AG04449 (cell line): ENCODE measurements at regions of chr15 and their contacts with region 1.

Region 1: GRCh38 chr15:32838820-32839219 is 121.0 kb downstream of the GREM1 start:
- DNase-seq: peak; percentile 88
- H3K4me3 ChIP-seq: peak overlapping the region; percentile 40
- CTCF ChIP-seq: no peak

Region 2: GRCh38 chr15:32828507-32829186 is 10.2 kb before region 1 on chr15:
- CTCF ChIA-PET with region 1: interaction called, 84 read pairs
- POLR2A ChIA-PET with region 1: interaction called, 13 read pairs
- DNase-seq: peak; percentile 96
- H3K4me3 ChIP-seq: no peak overlapping the region
- CTCF ChIP-seq: no peak